H1 (cell line): ENCODE measurements at regions of chr1 and their contacts with region 1.

Region 1: GRCh38 chr1:90475631-90476030 is 241.5 kb downstream of the BARHL2 start:
- DNase-seq: no peak
- H3K4me3 ChIP-seq: no peak overlapping the region
- H3K27ac ChIP-seq: no peak overlapping the region
- H3K4me1 ChIP-seq: no peaks in the 10 kb centered on the region
- H3K27me3 ChIP-seq: no peaks in the 10 kb centered on the region
- CTCF ChIP-seq: peak in 2 of 3 experiments; percentile 37 to 52; a peak in 2 of 4 replicates
- EP300 ChIP-seq: no peak
- POLR2A ChIP-seq: no peak
- RAD21 ChIP-seq: peak; percentile 44 to 56

Region 2: DNA sequence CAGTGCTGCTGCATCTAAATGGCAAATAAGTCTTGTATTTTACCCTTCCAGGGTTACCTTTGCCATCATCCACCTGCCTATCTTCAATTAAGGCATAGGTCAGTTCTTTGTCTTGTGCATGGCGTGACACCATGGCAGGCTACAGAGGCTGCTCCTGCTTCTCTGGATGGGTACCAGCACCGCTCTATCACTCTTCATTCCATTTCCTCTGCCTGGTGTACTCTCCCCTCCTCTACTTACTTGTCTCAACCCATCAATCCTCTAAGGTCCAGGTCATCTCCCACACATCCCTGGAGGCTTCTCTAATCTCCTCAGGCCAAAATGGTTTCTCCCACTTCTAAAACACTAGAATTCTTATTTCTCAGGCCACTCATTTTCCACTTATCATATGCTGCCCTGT is 16.1 kb before region 1 on chr1:
- CTCF ChIA-PET with region 1: interaction called, 17 read pairs
- POLR2A ChIA-PET with region 1: no interaction called
- DNase-seq: no peak
- H3K4me3 ChIP-seq: no peak overlapping the region
- H3K27ac ChIP-seq: no peak overlapping the region
- H3K4me1 ChIP-seq: no peaks in the 10 kb centered on the region
- H3K27me3 ChIP-seq: no peaks in the 10 kb centered on the region
- CTCF ChIP-seq: no peak
- EP300 ChIP-seq: no peak
- POLR2A ChIP-seq: no peak
- RAD21 ChIP-seq: no peak

Region 3: GRCh38 chr1:90591970-90592356 is 116.3 kb after region 1 on chr1:
- CTCF ChIA-PET with region 1: interaction called, 11 read pairs
- POLR2A ChIA-PET with region 1: no interaction called
- DNase-seq: peak; percentile 41 to 72
- H3K4me3 ChIP-seq: no peak overlapping the region
- H3K27ac ChIP-seq: no peak overlapping the region
- H3K4me1 ChIP-seq: no peaks in the 10 kb centered on the region
- H3K27me3 ChIP-seq: no peaks in the 10 kb centered on the region
- CTCF ChIP-seq: peak; percentile 53 to 76 (median 75)
- EP300 ChIP-seq: no peak
- POLR2A ChIP-seq: no peak
- RAD21 ChIP-seq: peak; percentile 77 to 82

Region 4: DNA sequence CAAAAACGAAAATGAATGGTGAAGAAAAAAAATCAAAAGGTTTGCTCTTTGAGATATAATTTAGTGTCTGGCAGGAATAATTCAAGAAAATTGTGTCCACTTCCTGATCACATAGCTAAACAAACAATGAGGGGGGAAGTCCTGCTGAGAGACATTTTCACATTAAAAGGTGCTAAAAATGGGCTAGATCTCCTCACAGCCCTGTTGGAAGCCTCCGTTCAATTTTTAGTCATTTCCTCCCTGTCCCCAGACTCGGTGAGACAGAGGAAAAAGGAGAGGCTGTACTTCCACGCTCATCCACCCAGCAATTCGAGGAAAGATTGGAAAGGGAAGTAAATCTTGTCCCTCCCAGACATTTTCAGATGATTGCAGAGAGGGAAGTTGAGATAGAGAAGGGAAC is 137.7 kb after region 1 on chr1:
- CTCF ChIA-PET with region 1: no interaction called
- POLR2A ChIA-PET with region 1: no interaction called
- DNase-seq: no peak
- H3K4me3 ChIP-seq: no peak overlapping the region
- H3K27ac ChIP-seq: no peak overlapping the region
- H3K4me1 ChIP-seq: peaks cover 0 to 4% (median 1%) of the 10 kb centered on the region in 4 experiments; a peak in 1 of 7 replicates
- H3K27me3 ChIP-seq: no peaks in the 10 kb centered on the region; a peak in 1 of 7 replicates
- CTCF ChIP-seq: no peak
- EP300 ChIP-seq: no peak
- POLR2A ChIP-seq: no peak
- RAD21 ChIP-seq: no peak